ENCODE measurements at regions of chr1 and their contacts with region 1.

Region 1: GRCh38 chr1:34796990-34797389 is 4.2 kb downstream of the GJA4 start:
- DNase-seq: no peak
- H3K27ac ChIP-seq: no peak overlapping the region
- CTCF ChIP-seq: no peak

Region 2: DNA sequence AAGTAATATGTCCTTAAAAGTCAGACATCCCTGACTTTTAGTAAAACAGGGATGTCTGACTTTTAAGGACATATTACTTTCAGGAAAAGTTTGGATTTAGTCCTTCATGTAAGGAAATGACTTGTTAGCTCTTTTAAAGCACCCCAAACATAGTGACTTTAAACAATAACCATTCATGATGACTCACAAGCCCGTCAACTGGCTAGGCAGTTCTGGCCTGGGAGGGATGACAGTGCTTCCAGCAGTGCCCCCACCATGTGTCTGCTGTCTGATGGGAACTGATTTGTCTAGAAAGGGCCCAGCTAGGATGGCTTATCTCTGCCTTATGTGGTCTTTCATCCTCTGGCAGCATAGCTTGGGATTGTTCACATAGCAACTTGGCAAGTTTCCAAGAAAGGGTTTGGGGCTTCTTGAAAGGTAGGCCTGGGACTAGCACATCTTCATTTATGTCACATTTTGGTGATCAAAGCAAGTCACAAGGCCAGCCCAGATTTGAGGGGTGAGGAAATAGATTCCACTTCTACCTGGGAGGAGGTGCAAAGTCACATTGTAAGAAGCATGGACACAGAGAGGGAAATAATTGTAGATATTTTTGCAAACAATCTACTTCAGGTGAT is 476.8 kb before region 1 on chr1:
- CTCF ChIA-PET with region 1: no interaction called
- POLR2A ChIA-PET with region 1: interaction called, 13 read pairs
- DNase-seq: no peak
- H3K27ac ChIP-seq: no peak overlapping the region
- CTCF ChIP-seq: no peak

Measured in RWPE1 (cell line).